Left cardiac atrium (tissue), 4 donors: ENCODE measurements at regions of chr12 and their contacts with region 1.

Region 1: DNA sequence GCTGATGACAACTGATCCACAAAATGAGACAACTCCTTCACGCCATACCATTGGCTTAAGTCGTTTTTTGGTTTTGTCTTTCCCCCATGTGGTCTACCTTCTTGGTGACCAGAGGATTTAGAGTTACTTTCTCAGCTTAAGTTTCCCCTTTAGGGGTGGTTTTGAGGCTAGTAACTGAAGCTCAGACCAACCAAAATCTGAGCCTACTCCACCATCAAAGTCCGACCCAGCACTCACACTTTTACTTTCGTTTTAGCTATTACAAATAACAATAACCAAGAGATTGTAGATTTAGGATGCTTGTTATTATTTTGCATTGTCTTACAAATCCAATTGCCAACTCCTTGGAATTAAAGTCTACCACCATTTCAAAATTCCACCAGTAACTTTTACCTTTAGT is 130.6 kb upstream of the MDM1 start:
- DNase-seq: no peak
- ATAC-seq: no peak

Region 2: GRCh38 chr12:68498732-68499131 is 35.9 kb after region 1 on chr12:
- intact Hi-C with region 1: loop called in 1 of 2 experiments (anchors 1 kb)
- DNase-seq: no peak
- ATAC-seq: no peak

Region 3: DNA sequence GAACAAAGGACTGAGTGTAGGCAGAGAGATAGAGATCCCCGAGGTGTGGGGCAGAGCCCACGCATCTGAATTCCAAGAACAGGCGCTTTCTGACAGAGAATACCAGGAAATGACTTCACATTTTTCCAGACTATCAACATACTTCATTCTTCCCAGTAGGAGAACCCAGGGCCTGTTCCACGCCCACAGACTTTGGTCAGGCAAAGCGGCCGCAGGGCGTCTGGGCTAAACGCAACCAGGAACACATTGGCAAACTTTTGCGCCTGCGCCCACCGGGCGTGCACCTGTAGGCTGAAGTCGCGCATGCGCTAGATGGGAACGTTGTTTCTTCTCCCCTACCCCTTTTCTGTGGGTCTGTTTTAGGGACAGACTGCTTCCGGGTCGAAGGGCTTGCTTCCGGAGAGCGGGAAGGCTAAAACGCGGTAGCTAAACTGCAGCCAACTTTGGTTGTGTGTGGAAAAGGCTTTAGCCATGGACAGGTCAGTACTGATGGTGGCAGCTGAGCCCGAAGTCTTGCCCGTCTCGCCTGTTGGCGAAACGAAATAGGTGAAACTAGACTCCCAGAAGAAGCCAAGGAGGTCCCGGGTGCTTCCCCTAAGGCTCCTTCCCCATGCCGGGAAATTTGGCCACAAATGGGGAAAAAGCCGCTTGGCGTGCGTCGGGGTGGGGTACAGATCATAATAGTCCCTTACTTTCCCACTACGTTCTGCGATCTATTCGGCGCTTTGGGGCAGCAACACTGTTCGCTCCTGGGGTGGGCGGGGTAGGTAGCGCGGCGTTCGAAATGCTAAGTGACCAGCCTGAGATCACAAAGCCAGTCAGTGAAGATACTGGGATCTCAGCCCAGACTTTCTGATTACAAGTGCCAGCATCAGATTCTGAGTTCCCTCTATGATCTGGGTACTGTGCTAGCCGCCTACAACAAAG is 224.1 kb after region 1 on chr12 and contains the start of gene NUP107:
- intact Hi-C with region 1: no loop called
- DNase-seq: peak; percentile 100
- ATAC-seq: peak; percentile 98 to 99
- total RNA-seq, gene NUP107: 23.5 to 31.6 TPM